ENCODE measurements at regions of chr9 and their contacts with region 1.

Region 1: GRCh38 chr9:684054-684890 is 157.2 kb upstream of the DMRT1 start:
- DNase-seq: no peak
- H3K4me3 ChIP-seq: peak overlapping the region; percentile 22
- H3K4me3 Mint-ChIP-seq: peak overlapping the region; percentile 34
- H3K27ac Mint-ChIP-seq: no peak overlapping the region
- H3K4me1 ChIP-seq: peaks cover 35% of the 10 kb centered on the region
- H3K4me1 Mint-ChIP-seq: no peaks in the 10 kb centered on the region
- H3K27me3 ChIP-seq: no peaks in the 10 kb centered on the region
- H3K27me3 Mint-ChIP-seq: no peaks in the 10 kb centered on the region
- CTCF ChIP-seq: no peak

Region 2: DNA sequence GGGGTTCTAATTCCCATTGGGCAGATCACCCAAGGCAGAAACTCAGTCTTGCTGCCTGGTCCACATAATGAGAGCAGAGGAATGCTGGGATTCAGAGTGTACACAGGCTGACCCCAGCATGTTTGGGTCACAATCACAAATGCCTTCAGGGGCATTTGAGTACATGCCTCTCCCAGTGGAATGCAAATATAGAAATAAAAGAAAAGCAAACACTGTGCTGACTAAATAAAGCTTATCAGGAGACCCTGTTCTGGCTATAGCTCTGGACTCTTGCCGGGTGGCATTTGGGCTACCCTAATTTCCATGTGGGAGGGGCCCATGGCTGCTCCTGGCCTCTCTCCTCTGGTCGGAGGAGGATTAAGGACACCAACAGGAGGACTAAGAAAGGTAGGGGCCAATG is 348.2 kb before region 1 on chr9:
- CTCF ChIA-PET with region 1: no interaction called
- POLR2A ChIA-PET with region 1: no interaction called
- intact Hi-C with region 1: loop called (anchors 5 kb)
- DNase-seq: peak; percentile 83
- H3K4me3 ChIP-seq: no peak overlapping the region
- H3K4me3 Mint-ChIP-seq: peak overlapping the region; percentile 46
- H3K27ac Mint-ChIP-seq: peak overlapping the region; percentile 88
- H3K4me1 ChIP-seq: peaks cover 27% of the 10 kb centered on the region
- H3K4me1 Mint-ChIP-seq: peaks cover 19% of the 10 kb centered on the region
- H3K27me3 ChIP-seq: no peaks in the 10 kb centered on the region
- H3K27me3 Mint-ChIP-seq: no peaks in the 10 kb centered on the region
- CTCF ChIP-seq: no peak

Region 3: GRCh38 chr9:626596-626995 is 57.7 kb before region 1 on chr9:
- CTCF ChIA-PET with region 1: no interaction called
- POLR2A ChIA-PET with region 1: no interaction called
- intact Hi-C with region 1: loop called (anchors 5 kb)
- DNase-seq: no peak
- H3K4me3 ChIP-seq: no peak overlapping the region
- H3K4me3 Mint-ChIP-seq: no peak overlapping the region
- H3K27ac Mint-ChIP-seq: no peak overlapping the region
- H3K4me1 ChIP-seq: no peaks in the 10 kb centered on the region
- H3K4me1 Mint-ChIP-seq: peaks cover 5% of the 10 kb centered on the region
- H3K27me3 ChIP-seq: no peaks in the 10 kb centered on the region
- H3K27me3 Mint-ChIP-seq: no peaks in the 10 kb centered on the region
- CTCF ChIP-seq: no peak

Region 4: GRCh38 chr9:673966-674526 is 10.2 kb before region 1 on chr9:
- CTCF ChIA-PET with region 1: no interaction called
- POLR2A ChIA-PET with region 1: no interaction called
- intact Hi-C with region 1: loop called (anchors 1 kb)
- DNase-seq: peak in 1 of 2 experiments; percentile 5
- H3K4me3 ChIP-seq: no peak overlapping the region
- H3K4me3 Mint-ChIP-seq: no peak overlapping the region
- H3K27ac Mint-ChIP-seq: no peak overlapping the region
- H3K4me1 ChIP-seq: peaks cover 64% of the 10 kb centered on the region
- H3K4me1 Mint-ChIP-seq: peaks cover 27% of the 10 kb centered on the region
- H3K27me3 ChIP-seq: no peaks in the 10 kb centered on the region
- H3K27me3 Mint-ChIP-seq: no peaks in the 10 kb centered on the region
- CTCF ChIP-seq: no peak

Region 5: DNA sequence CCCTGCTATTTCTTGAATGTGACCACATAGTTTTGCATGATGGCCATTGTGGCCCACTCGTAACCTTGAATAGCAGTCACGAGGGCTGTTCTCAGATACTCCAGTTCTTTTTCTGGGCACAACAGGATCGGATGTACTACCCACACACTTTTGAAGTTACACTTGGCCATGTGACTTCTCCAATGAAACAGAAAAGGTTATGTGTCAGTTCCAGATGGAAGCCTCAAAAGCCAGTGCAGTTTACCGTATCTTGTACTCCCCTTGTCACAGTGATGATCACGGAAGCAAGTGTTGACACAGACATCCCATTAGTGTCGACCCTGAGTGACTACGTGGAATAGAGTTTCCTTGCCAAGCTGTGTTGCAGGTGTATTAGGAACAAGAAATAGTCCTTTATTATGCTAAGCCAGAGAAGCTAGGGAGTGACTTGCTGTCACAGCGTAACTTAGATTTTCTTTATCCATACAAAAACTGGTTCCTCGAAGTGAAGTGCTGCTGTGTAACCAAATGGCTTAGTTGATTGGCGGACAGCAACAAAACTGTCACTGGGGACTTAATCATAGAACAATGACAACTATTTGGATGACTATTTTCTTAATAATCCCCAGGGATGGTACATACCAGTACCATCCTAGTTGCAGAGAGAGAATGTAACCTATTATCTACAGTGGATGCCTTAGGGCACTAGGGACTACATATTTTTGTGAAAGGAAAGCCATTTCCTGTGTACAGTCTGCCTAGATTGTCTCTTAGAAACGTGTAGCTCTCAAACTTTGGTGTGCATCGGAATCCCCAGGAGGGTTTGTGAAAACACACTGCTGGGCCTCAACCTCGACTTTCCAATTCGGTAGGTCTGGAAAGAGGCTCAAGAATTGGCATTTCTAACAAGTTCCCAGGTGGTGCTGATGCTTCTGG is 67.1 kb after region 1 on chr9:
- CTCF ChIA-PET with region 1: no interaction called
- POLR2A ChIA-PET with region 1: interaction called, 11 read pairs
- intact Hi-C with region 1: no loop called
- DNase-seq: peak in 1 of 2 experiments; percentile 24
- H3K4me3 ChIP-seq: no peak overlapping the region
- H3K4me3 Mint-ChIP-seq: no peak overlapping the region
- H3K27ac Mint-ChIP-seq: peak overlapping the region; percentile 19
- H3K4me1 ChIP-seq: peaks cover 13% of the 10 kb centered on the region; the same call in 1 of the 2 replicates
- H3K4me1 Mint-ChIP-seq: no peaks in the 10 kb centered on the region
- H3K27me3 ChIP-seq: no peaks in the 10 kb centered on the region
- H3K27me3 Mint-ChIP-seq: no peaks in the 10 kb centered on the region
- CTCF ChIP-seq: no peak

Measured in Caco-2 (cell line).